MCF 10A (cell line): ENCODE measurements at regions of chr6 and their contacts with region 1.

Region 1: GRCh38 chr6:138099832-138100231 is 7.4 kb downstream of the PERP start:
- DNase-seq: peak; percentile 76
- H3K4me3 Mint-ChIP-seq: peak overlapping the region; percentile 37
- H3K27ac Mint-ChIP-seq: peak overlapping the region; percentile 81
- H3K4me1 Mint-ChIP-seq: peaks cover 40% of the 10 kb centered on the region
- H3K27me3 Mint-ChIP-seq: no peaks in the 10 kb centered on the region
- CTCF ChIP-seq: no peak

Region 2: DNA sequence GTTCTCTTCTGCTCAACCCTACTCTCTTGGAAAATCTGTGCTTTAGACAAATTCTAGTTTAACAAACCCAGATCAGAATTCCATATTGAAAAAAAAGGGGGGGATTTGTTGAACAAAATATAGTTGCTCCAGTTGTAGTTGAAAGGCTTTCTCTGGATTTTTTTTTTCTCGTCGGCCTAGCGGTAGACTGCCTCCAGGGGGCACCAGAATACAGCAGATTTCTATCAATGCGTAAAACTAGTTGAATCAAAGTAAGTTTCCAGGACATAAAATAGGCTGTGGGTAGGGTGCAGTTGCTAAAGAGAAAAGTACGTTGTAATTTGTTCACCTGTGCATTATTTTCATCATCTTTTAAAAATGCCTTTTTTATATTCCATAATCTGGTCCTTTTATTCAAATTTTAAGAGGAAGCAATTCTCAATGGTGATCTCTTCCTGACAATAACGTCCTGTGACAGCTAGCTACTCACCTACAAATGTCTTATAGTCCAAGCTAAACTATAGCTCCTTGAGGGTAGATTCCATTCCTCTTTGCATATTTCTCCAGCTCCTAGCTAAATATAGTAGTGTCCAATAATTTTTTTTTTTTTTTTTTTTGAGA is 98.0 kb before region 1 on chr6:
- CTCF ChIA-PET with region 1: interaction called, 28 read pairs
- POLR2A ChIA-PET with region 1: interaction called, 386 read pairs
- intact Hi-C with region 1: no loop called
- DNase-seq: peak; percentile 65
- H3K4me3 Mint-ChIP-seq: no peak overlapping the region
- H3K27ac Mint-ChIP-seq: no peak overlapping the region
- H3K4me1 Mint-ChIP-seq: peaks cover 10% of the 10 kb centered on the region
- H3K27me3 Mint-ChIP-seq: no peaks in the 10 kb centered on the region
- CTCF ChIP-seq: peak; percentile 83

Region 3: GRCh38 chr6:138007014-138007472 is 92.8 kb before region 1 on chr6:
- CTCF ChIA-PET with region 1: interaction called, 28 read pairs
- POLR2A ChIA-PET with region 1: interaction called, 386 read pairs
- intact Hi-C with region 1: no loop called
- DNase-seq: peak; percentile 69
- H3K4me3 Mint-ChIP-seq: no peak overlapping the region
- H3K27ac Mint-ChIP-seq: peak overlapping the region; percentile 47
- H3K4me1 Mint-ChIP-seq: peaks cover 17% of the 10 kb centered on the region
- H3K27me3 Mint-ChIP-seq: no peaks in the 10 kb centered on the region
- CTCF ChIP-seq: peak; percentile 49

Region 4: DNA sequence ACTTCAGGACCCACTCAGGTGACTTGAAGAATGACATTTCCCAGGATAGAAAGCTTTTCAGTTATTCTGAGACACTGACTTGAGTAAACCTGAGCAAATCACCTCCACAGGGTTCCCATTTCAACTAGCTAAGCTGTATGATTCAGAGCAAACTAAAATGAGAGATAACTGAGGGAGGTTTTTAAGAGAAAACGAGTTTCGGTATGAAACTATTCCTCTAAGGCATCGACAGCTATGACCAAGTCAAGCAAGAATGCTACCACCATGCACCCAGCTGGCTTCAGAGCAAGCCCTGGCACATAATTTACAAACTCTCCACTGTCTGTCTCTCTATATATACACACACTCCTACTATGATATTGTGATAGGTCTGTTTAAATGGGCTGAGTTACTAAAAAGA is 68.0 kb before region 1 on chr6:
- CTCF ChIA-PET with region 1: interaction called, 26 read pairs
- POLR2A ChIA-PET with region 1: interaction called, 717 read pairs
- intact Hi-C with region 1: no loop called
- DNase-seq: peak; percentile 62
- H3K4me3 Mint-ChIP-seq: peak overlapping the region; percentile 55
- H3K27ac Mint-ChIP-seq: peak overlapping the region; percentile 91
- H3K4me1 Mint-ChIP-seq: peaks cover 62% of the 10 kb centered on the region
- H3K27me3 Mint-ChIP-seq: no peaks in the 10 kb centered on the region
- CTCF ChIP-seq: no peak